ENCODE measurements at regions of chr3 and their contacts with region 1.

Region 1: DNA sequence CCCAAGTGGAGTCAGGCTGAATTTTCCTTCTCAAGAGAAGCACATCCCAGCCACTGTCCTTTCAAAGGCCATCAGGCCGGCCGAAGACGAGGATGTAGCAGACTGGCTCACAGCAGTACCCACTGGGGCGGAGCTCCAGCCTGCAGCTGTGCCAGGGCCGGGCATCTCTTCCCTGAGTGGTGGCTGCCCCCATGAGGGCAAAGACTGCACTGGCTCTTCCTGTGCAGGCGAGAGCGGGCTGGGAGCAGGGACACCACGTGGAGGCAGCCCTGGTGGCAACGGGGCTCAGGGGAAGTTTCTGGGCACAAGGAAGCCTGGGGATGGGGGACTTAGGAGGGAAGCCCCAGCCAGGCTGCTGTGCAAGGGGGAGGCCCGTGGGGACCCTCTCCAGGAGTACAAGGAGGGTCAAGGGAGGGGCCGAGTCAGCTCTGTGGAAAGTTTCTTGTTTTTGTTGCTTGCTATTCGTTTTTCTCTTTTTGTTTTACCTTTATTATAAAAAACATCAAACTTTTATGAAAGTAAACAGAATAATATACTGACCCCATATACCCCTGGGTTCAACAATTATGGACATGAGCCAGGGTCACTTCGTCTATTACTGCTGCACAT is 66.1 kb downstream of the RPN1 start:
- DNase-seq: peak; percentile 70 to 94 (median 84)
- ATAC-seq: peak; percentile 99 to 100 (median 100)
- H3K4me3 ChIP-seq: no peak overlapping the region
- H3K27ac ChIP-seq: no peak overlapping the region
- H3K4me1 ChIP-seq: no peaks in the 10 kb centered on the region
- H3K27me3 ChIP-seq: no peaks in the 10 kb centered on the region
- CTCF ChIP-seq: peak; percentile 47 to 68 (median 63)

Region 2: GRCh38 chr3:128095222-128095703 is 489.3 kb before region 1 on chr3:
- intact Hi-C with region 1: loop called in 1 of 3 experiments (anchors 10 kb)
- DNase-seq: peak; percentile 80 to 95 (median 90)
- ATAC-seq: peak; percentile 94 to 98 (median 97)
- H3K4me3 ChIP-seq: no peak overlapping the region
- H3K27ac ChIP-seq: no peak overlapping the region
- H3K4me1 ChIP-seq: peaks cover 8 to 17% (median 10%) of the 10 kb centered on the region in 3 donors
- H3K27me3 ChIP-seq: no peaks in the 10 kb centered on the region
- CTCF ChIP-seq: peak; percentile 63 to 80 (median 78)

Region 3: DNA sequence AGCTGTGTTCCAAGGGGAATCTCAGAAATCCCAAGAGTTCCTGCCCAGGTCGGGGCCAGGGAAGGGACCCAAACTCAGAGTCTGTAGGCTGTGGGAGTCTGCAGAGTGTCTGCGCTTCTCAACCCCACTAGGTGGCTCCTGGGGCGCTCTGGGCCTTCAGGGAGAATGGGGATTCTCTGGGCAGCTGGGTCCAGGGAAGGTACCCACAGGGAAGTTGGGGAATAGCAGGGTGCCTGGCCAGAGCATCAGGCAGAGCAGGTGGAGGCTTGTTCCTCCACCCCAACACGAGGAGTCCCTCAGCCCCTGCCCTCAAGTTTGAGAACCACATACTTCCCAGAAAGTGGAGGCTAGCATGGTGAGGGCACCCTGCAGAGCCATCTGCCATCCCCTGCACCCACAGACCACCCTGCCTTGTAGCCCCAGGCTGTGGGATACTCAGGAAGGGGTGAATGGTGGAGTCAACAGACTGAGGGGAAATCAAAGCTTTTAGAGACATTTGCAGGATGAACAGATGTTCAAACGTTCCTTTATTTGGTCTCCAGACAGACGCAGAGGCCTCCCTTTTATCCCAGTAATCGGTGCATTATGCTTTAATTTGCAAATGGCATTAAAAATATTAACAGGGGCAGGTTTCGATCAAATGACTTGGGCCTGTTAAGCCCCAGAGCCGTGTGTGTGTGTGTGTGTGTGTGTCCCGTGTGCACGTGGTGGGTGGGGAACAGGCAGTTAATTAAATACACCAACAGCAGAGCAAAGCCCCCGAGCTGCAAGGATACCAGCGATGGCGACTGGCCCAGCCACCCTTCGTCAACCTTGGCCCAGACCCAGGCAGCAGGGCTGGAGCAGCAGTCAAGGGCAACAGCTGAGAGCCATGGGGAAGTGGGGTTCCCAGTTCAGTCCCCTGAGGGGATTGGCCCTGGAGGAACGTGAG is 175.6 kb before region 1 on chr3:
- intact Hi-C with region 1: no loop called
- DNase-seq: peak in 5 of 6 donors; percentile 56 to 75 (median 65)
- ATAC-seq: peak; percentile 35 to 57 (median 48)
- H3K4me3 ChIP-seq: no peak overlapping the region
- H3K27ac ChIP-seq: peak overlapping the region in 3 of 4 donors; percentile 16 to 63 (median 55)
- H3K4me1 ChIP-seq: peaks cover 15 to 45% (median 26%) of the 10 kb centered on the region in 3 donors
- H3K27me3 ChIP-seq: no peaks in the 10 kb centered on the region
- CTCF ChIP-seq: no peak

Region 4: GRCh38 chr3:128426128-128426921 is 158.2 kb before region 1 on chr3:
- intact Hi-C with region 1: loop called in 2 of 3 experiments (anchors 5 to 10 kb)
- DNase-seq: peak; percentile 54 to 90 (median 71)
- ATAC-seq: peak; percentile 95 to 98 (median 98)
- H3K4me3 ChIP-seq: peak overlapping the region in 3 of 4 donors; percentile 8 to 37 (median 13)
- H3K27ac ChIP-seq: no peak overlapping the region
- H3K4me1 ChIP-seq: peaks cover 0 to 8% (median 0%) of the 10 kb centered on the region in 3 donors
- H3K27me3 ChIP-seq: no peaks in the 10 kb centered on the region
- CTCF ChIP-seq: peak; percentile 74 to 86 (median 83)